CD8-positive, alpha-beta memory T cell (primary cell): ENCODE measurements at regions of chr1 and their contacts with region 1.

Region 1: GRCh38 chr1:156445789-156446263 is 54.7 kb downstream of the MEF2D start:
- DNase-seq: peak; percentile 62 to 85 (median 73)
- H3K4me3 ChIP-seq: no peak overlapping the region
- H3K4me3 Mint-ChIP-seq: no peak overlapping the region
- H3K27ac ChIP-seq: no peak overlapping the region
- H3K27ac Mint-ChIP-seq: peak overlapping the region in 1 of 8 donors; percentile 19
- H3K4me1 ChIP-seq: peaks cover 6% of the 10 kb centered on the region
- H3K4me1 Mint-ChIP-seq: peaks cover 4 to 6% (median 6%) of the 10 kb centered on the region in 3 donors
- H3K27me3 ChIP-seq: peaks cover 30% of the 10 kb centered on the region
- H3K27me3 Mint-ChIP-seq: peaks cover 37 to 64% of the 10 kb centered on the region in 2 donors

Region 2: GRCh38 chr1:156383023-156383422 is 62.8 kb before region 1 on chr1:
- CTCF ChIA-PET with region 1: interaction called, 185 read pairs
- POLR2A ChIA-PET with region 1: interaction called, 10 read pairs
- DNase-seq: peak; percentile 37 to 73 (median 40)
- H3K4me3 ChIP-seq: no peak overlapping the region
- H3K4me3 Mint-ChIP-seq: no peak overlapping the region
- H3K27ac ChIP-seq: no peak overlapping the region
- H3K27ac Mint-ChIP-seq: no peak overlapping the region
- H3K4me1 ChIP-seq: peaks cover 6% of the 10 kb centered on the region
- H3K4me1 Mint-ChIP-seq: peaks cover 6 to 7% (median 7%) of the 10 kb centered on the region in 3 donors
- H3K27me3 ChIP-seq: no peaks in the 10 kb centered on the region
- H3K27me3 Mint-ChIP-seq: peaks cover 4 to 17% of the 10 kb centered on the region in 2 donors

Region 3: DNA sequence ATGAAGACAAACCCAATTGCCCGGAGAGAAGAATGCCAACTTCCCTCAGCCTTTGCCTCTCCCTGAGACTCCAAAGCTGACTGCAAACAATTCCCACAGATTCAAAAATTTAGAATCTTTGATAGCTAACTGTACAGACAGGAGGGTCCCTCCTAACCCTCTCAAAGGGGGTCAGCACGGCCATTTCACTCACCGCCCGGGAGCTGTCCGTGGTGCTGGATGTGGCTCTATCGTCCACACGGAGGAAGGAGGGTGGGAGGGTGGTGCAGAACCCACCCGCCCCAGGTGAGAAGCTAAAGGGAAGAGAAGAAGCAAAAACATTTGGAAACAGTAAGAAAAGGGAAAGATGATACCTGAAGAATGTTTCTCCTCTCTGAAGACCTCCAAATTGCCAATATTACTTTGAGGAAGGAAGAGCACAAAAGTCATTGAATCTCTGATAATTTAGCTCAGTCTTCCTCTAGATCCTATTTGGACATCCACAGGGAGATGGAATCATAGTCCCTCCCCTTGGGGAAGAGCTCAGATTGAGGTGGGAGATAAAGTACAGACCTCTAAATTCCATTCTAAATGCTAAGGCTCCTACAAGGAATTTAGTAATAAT is 31.3 kb before region 1 on chr1:
- CTCF ChIA-PET with region 1: interaction called, 35 read pairs
- POLR2A ChIA-PET with region 1: no interaction called
- DNase-seq: no peak
- H3K4me3 ChIP-seq: no peak overlapping the region
- H3K4me3 Mint-ChIP-seq: peak overlapping the region in 1 of 7 donors; percentile 15
- H3K27ac ChIP-seq: no peak overlapping the region
- H3K27ac Mint-ChIP-seq: no peak overlapping the region
- H3K4me1 ChIP-seq: peaks cover under 1% of the 10 kb centered on the region
- H3K4me1 Mint-ChIP-seq: peaks cover 6 to 10% (median 10%) of the 10 kb centered on the region in 3 donors
- H3K27me3 ChIP-seq: no peaks in the 10 kb centered on the region
- H3K27me3 Mint-ChIP-seq: peaks cover 10 to 59% of the 10 kb centered on the region in 2 donors

Region 4: GRCh38 chr1:156456622-156457465 is 11.0 kb after region 1 on chr1:
- CTCF ChIA-PET with region 1: interaction called, 18 read pairs
- POLR2A ChIA-PET with region 1: interaction called, 3 read pairs
- DNase-seq: peak; percentile 93 to 99 (median 96)
- H3K4me3 ChIP-seq: peak overlapping the region; percentile 100
- H3K4me3 Mint-ChIP-seq: peak overlapping the region; percentile 91 to 97 (median 95)
- H3K27ac ChIP-seq: peak overlapping the region; percentile 99
- H3K27ac Mint-ChIP-seq: peak overlapping the region; percentile 98 to 100 (median 99)
- H3K4me1 ChIP-seq: peaks cover 12% of the 10 kb centered on the region
- H3K4me1 Mint-ChIP-seq: peaks cover 12 to 20% (median 17%) of the 10 kb centered on the region in 3 donors
- H3K27me3 ChIP-seq: no peaks in the 10 kb centered on the region
- H3K27me3 Mint-ChIP-seq: peaks cover 0 to 1% of the 10 kb centered on the region in 2 donors

Region 5: DNA sequence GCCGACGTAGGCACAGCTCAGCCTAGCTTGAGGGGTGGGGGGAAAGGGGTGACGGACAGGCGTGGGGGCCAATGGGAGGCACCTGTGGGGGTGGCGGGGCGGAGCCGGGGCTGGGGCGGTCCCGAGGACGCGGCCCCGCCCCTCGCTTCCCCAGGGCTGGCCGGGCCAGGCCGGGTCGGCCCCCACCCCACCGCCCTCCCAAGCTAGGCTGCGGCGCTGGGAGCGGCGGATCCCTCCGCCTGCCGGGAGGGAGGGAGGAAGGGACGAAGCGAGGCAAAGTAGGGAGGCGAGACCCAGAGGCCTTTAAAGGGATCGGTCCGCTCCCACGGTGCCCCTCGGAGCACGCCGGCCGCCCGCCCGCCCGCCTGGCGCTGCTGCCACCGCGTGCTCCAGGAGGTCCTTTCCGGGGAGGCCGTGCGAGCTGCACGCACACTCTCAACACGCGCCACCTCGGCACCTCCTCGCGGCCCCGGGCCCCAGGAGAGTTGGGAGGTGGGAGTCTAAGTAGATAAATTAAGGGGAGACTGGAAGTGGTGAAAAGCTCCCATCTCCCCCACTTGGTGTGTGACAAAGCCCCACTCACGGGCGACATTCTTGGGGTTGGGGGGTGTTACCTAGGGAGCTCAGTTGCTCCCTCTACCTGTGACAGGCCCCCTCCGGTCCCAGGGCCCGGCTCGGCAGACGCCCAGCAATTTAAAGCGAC is 55.1 kb after region 1 on chr1:
- CTCF ChIA-PET with region 1: interaction called, 10 read pairs
- POLR2A ChIA-PET with region 1: no interaction called
- DNase-seq: peak; percentile 90 to 97 (median 94)
- H3K4me3 ChIP-seq: peak overlapping the region; percentile 79
- H3K4me3 Mint-ChIP-seq: peak overlapping the region; percentile 81 to 98 (median 93)
- H3K27ac ChIP-seq: peak overlapping the region; percentile 95
- H3K27ac Mint-ChIP-seq: peak overlapping the region; percentile 98 to 100 (median 99)
- H3K4me1 ChIP-seq: peaks cover 77% of the 10 kb centered on the region
- H3K4me1 Mint-ChIP-seq: peaks cover 75 to 79% (median 78%) of the 10 kb centered on the region in 3 donors
- H3K27me3 ChIP-seq: no peaks in the 10 kb centered on the region
- H3K27me3 Mint-ChIP-seq: peaks cover 0 to 7% of the 10 kb centered on the region in 2 donors

Region 6: DNA sequence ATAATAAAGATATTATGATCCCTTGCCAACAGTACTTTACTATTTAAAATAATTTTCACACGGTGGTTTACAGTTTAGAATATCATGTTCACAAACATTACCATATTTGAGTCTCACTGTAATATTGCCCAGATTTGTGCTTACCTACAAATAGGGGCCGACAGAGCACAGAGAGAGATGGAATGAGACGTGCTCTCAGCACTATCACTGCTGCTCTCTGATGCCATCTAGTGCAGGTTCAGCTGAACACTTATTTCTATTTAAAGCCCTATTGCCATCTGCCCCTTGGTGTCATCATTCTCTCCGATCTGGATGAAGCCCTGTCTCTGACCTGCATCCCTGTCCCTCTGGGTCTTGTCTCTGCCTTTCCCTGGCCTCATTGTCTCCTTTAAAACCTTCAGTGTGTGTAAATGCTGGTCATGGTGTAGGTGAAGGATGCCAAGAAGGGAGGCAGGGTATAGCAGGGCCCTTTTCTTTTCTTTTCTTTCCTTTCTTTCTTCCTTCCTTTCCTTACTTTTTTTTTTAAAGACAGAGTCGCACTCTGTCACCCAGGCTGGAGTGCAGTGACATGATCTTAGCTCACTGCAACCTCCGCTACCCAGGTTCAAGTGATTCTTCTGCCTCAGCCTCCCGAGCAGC is 162.3 kb after region 1 on chr1:
- CTCF ChIA-PET with region 1: interaction called, 11 read pairs
- POLR2A ChIA-PET with region 1: no interaction called
- DNase-seq: peak; percentile 32 to 73 (median 62)
- H3K4me3 ChIP-seq: no peak overlapping the region
- H3K4me3 Mint-ChIP-seq: peak overlapping the region in 2 of 7 donors; percentile 25 to 41
- H3K27ac ChIP-seq: no peak overlapping the region
- H3K27ac Mint-ChIP-seq: no peak overlapping the region
- H3K4me1 ChIP-seq: peaks cover 10% of the 10 kb centered on the region
- H3K4me1 Mint-ChIP-seq: peaks cover 6 to 15% (median 9%) of the 10 kb centered on the region in 3 donors
- H3K27me3 ChIP-seq: no peaks in the 10 kb centered on the region
- H3K27me3 Mint-ChIP-seq: peaks cover 5 to 26% of the 10 kb centered on the region in 2 donors

Region 7: GRCh38 chr1:157004806-157005205 is 559.0 kb after region 1 on chr1:
- CTCF ChIA-PET with region 1: no interaction called
- POLR2A ChIA-PET with region 1: no interaction called
- DNase-seq: no peak
- H3K4me3 ChIP-seq: no peak overlapping the region
- H3K4me3 Mint-ChIP-seq: no peak overlapping the region
- H3K27ac ChIP-seq: no peak overlapping the region
- H3K27ac Mint-ChIP-seq: no peak overlapping the region
- H3K4me1 ChIP-seq: no peaks in the 10 kb centered on the region
- H3K4me1 Mint-ChIP-seq: no peaks in the 10 kb centered on the region
- H3K27me3 ChIP-seq: no peaks in the 10 kb centered on the region
- H3K27me3 Mint-ChIP-seq: peaks cover 22 to 55% of the 10 kb centered on the region in 2 donors